Left cardiac atrium (tissue), 4 donors: ENCODE measurements at regions of chr17 and their contacts with region 1.

Region 1: GRCh38 chr17:78497115-78497540 is 80.1 kb downstream of the DNAH17 start:
- DNase-seq: peak; percentile 78
- ATAC-seq: peak; percentile 85 to 92

Region 2: GRCh38 chr17:78708510-78708973 is 211.4 kb after region 1 on chr17:
- intact Hi-C with region 1: loop called (anchors 1 to 5 kb)
- DNase-seq: peak; percentile 79
- ATAC-seq: peak; percentile 88 to 90

Region 3: DNA sequence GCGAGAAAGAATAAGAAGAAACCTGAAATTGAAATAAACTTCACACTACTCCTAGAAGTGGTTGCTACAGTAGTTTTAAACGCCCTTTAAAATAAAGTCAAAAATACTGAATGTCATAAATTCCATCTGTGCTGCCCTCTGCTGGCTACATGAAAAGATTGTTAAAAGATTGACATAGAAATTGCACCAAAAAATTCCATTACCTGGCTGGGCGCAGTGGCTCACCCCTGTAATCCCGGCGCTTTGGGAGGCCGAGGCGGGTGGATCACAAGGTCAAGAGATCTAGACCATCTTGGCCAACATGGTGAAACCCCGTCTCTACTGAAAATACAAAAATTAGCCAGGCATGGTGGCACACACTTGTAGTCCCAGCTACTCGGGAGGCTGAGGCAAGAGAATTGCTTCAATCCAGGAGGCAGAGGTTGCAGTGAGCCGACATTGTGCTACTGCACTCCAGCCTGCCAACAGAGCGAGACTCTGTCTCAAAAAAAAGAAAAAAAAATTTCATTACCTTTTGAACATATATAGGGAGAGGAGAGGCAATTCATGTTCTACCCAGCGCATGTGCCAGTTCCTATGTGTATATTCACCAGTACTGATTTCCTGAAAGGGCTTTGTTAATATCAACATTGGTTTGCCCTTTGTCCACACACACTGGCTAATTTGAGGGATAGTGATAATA is 248.4 kb after region 1 on chr17:
- intact Hi-C with region 1: loop called in 1 of 2 experiments (anchors 5 kb)
- DNase-seq: no peak
- ATAC-seq: no peak

Region 4: DNA sequence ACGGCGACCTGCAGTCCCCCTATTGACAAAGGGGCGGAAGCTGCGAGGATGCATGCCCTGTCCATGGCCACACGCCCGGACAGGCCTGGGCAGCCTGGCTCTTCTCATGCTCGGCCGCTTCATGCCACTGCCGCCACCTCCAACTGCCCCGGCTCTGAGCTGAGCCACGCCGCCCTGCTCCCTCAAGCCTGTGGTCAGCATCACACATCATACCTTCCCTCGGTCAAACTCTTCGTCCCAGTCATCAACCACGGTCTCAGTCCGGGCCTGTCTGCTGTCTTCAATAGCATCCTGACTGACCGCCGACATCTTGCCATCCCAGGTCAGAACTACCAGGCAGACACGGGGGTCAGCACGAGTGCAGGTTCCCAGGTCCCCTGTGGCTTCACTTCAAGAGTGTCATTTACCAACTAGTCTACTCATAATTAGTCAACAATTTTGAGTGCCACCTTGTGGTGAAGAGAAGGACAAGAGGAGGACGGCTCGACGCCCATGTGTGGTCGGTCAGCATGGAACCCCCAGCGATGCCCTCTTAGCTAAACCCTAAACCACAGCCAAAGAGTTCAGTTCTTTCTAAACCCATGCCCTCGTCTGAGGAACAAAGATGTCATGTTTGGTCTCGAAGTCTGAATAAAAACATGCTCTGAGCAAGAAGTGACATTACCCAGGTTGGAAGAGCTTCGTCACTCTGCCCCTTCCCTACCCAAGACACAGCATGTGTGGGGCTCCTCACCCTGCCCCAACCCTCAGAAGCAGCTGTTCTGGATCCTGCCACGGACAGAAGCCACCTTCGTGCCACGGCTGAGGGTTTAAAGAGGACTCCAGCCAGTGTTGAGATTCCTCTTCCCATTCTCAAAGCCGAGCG is 301.8 kb after region 1 on chr17:
- intact Hi-C with region 1: loop called (anchors 5 kb)
- DNase-seq: no peak
- ATAC-seq: peak in 1 of 2 donors; percentile 45